ENCODE measurements at regions of chr1 and their contacts with region 1.

Region 1: DNA sequence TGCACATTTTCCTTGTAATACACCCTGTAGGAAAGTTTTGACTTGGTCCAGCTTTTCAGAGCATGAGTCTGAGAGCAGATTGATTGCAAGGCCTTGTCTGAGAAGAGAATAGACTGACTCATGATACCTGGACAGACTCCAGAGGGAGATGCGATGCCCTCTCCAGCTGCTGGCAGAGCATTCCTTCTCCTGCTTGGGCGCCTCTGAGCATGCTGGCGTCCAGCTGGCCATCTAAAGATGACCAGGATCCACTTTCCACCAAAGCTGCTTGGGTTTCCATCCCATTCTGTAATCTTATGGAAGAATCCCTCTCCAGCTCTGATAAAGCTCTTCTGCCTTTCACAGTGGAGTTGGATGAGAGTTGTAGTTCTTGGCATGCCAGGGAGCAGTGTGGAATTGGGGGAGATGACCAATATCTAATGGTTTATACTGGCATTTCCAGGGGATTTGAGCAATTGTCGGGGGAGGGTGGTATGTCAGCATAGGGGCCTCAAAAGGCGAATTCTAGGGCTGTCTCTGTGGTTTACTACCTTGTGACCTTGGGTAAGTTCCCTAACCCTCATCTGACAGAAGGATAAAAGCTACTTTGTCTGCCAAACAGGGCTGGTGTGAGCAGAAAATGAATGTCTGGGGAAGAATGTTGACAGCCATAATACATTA is 19.5 kb downstream of the SZRD1 start:
- DNase-seq: no peak
- ATAC-seq: peak; percentile 82
- H3K4me3 ChIP-seq: peak overlapping the region; percentile 20 to 42
- H3K27ac ChIP-seq: peak overlapping the region; percentile 76
- H3K4me1 ChIP-seq: peaks cover 55% of the 10 kb centered on the region
- H3K27me3 ChIP-seq: no peaks in the 10 kb centered on the region
- CTCF ChIP-seq: no peak

Region 2: DNA sequence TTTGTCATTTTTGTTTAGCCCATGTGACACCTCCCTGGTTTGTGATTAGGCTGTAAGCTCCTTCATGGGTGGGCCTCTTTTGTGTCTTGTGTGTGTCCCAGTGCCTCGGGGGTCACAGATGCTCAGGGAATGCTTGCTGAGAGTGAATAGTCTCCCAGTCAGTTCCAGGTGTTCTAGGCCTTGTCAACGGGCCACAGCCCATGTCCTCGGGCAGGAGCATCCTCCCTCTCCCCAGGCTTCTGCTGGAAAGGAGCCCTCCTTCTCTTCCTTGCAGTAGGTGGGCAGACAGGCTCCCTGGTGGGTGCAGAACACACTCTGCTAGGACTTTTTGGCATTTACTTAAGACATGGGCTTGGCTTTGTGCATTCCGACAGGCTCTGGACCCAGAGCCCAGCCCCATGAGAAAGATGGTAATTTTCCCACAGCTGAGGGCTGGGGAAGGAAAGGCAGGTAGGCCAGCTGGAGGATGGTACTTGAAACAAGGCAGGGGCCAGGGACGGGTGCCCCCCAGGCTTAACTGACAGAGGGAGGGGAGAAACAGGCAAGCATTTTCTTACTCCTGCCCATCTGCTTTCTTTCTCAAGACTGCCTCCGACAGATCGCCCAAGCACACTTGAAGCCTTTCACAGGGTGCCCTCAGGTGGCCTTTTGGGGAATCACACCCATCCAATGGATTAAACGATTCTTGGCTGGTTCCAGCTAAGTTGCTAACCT is 142.5 kb before region 1 on chr1:
- CTCF ChIA-PET with region 1: no interaction called
- POLR2A ChIA-PET with region 1: interaction called, 10 read pairs
- in situ Hi-C with region 1: no loop called
- intact Hi-C with region 1: no loop called
- DNase-seq: peak; percentile 74
- ATAC-seq: peak; percentile 91
- H3K4me3 ChIP-seq: no peak overlapping the region
- H3K27ac ChIP-seq: no peak overlapping the region
- H3K4me1 ChIP-seq: peaks cover 4% of the 10 kb centered on the region
- H3K27me3 ChIP-seq: no peaks in the 10 kb centered on the region
- CTCF ChIP-seq: peak; percentile 93

Region 3: GRCh38 chr1:16307222-16307621 is 79.4 kb before region 1 on chr1:
- CTCF ChIA-PET with region 1: interaction called, 11 read pairs
- POLR2A ChIA-PET with region 1: no interaction called
- in situ Hi-C with region 1: no loop called
- intact Hi-C with region 1: no loop called
- DNase-seq: no peak
- ATAC-seq: no peak
- H3K4me3 ChIP-seq: no peak overlapping the region
- H3K27ac ChIP-seq: no peak overlapping the region
- H3K4me1 ChIP-seq: no peaks in the 10 kb centered on the region
- H3K27me3 ChIP-seq: no peaks in the 10 kb centered on the region
- CTCF ChIP-seq: no peak

Region 4: GRCh38 chr1:16420424-16421118 is 34.0 kb after region 1 on chr1:
- CTCF ChIA-PET with region 1: no interaction called
- POLR2A ChIA-PET with region 1: interaction called, 10 read pairs
- in situ Hi-C with region 1: no loop called
- intact Hi-C with region 1: no loop called
- DNase-seq: no peak
- ATAC-seq: no peak
- H3K4me3 ChIP-seq: no peak overlapping the region
- H3K27ac ChIP-seq: no peak overlapping the region
- H3K4me1 ChIP-seq: no peaks in the 10 kb centered on the region; the same call in 1 of the 2 replicates
- H3K27me3 ChIP-seq: no peaks in the 10 kb centered on the region
- CTCF ChIP-seq: no peak

Measured in Panc1 (cell line).